CD4-positive, alpha-beta memory T cell (primary cell): ENCODE measurements at regions of chr20 and their contacts with region 1.

Region 1: DNA sequence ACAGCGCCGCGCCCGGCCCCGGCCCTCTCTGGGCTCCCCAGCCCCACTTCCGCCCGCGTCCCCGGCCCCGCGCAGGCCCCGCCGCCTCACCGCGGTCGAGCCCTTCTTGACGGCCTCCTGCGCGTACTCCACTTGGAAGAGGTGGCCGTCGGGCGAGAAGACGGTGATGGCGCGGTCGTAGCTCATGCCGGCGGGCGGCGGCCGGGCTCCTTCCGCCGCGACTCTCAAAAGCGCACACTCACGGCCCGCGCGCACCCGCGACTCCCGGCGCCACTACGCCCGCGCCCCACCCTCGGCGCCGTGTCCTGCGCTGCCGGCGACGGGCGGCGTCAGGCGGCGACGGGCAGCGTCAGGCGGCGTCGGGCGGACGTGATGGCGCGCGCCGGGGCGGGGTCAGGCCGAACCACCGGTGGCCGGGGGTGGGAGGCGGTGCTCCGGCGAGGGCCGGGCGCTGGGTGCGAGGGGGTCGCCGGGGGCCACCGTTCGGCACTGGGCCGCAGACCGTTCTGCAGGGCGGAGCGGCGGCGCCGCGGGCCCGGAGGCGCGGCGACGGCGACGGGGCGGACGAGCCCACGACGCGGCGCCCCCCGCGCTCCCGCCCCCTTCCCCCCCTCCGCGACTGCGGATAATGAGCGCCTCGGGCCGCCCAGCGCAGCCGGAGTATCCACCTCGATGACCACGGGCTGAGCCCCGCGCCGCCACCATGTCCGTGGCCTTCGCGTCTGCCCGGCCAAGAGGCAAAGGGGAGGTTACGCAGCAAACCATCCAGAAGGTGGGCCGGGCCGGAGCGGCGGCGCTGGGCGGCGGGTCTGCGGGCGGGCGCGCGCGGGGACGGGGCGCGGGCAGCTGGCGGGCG is at the starts of genes PSMA7 and SS18L1:
- DNase-seq: peak; percentile 81 to 90 (median 89)
- H3K4me3 ChIP-seq: peak within 1 kb of the TSS; percentile 17 to 62
- H3K4me3 Mint-ChIP-seq: peak within 1 kb of the TSS; percentile 91 to 98 (median 92)
- H3K27ac ChIP-seq: peak within 1 kb of the TSS; percentile 66
- H3K27ac Mint-ChIP-seq: peak within 1 kb of the TSS; percentile 94 to 96 (median 96)
- H3K4me1 ChIP-seq: peaks cover 41% of the 10 kb centered on the region
- H3K4me1 Mint-ChIP-seq: peaks cover 35 to 61% (median 48%) of the 10 kb centered on the region in 4 donors
- H3K27me3 ChIP-seq: no peaks in the 10 kb centered on the region
- H3K27me3 Mint-ChIP-seq: no peaks in the 10 kb centered on the region
- total RNA-seq, gene PSMA7: 182 to 190 TPM
- total RNA-seq, gene SS18L1: 22.7 to 24.8 TPM

Region 2: GRCh38 chr20:62010551-62011402 is 132.6 kb before region 1 on chr20:
- CTCF ChIA-PET with region 1: interaction called, 114 read pairs
- POLR2A ChIA-PET with region 1: interaction called, 6 read pairs
- intact Hi-C with region 1: no loop called
- DNase-seq: peak; percentile 63 to 70 (median 68)
- H3K4me3 ChIP-seq: no peak overlapping the region
- H3K4me3 Mint-ChIP-seq: peak overlapping the region in 1 of 8 donors; percentile 3
- H3K27ac ChIP-seq: no peak overlapping the region
- H3K27ac Mint-ChIP-seq: peak overlapping the region in 5 of 7 donors; percentile 4 to 76 (median 51)
- H3K4me1 ChIP-seq: no peaks in the 10 kb centered on the region
- H3K4me1 Mint-ChIP-seq: peaks cover 7 to 14% (median 9%) of the 10 kb centered on the region in 4 donors
- H3K27me3 ChIP-seq: no peaks in the 10 kb centered on the region
- H3K27me3 Mint-ChIP-seq: no peaks in the 10 kb centered on the region

Region 3: DNA sequence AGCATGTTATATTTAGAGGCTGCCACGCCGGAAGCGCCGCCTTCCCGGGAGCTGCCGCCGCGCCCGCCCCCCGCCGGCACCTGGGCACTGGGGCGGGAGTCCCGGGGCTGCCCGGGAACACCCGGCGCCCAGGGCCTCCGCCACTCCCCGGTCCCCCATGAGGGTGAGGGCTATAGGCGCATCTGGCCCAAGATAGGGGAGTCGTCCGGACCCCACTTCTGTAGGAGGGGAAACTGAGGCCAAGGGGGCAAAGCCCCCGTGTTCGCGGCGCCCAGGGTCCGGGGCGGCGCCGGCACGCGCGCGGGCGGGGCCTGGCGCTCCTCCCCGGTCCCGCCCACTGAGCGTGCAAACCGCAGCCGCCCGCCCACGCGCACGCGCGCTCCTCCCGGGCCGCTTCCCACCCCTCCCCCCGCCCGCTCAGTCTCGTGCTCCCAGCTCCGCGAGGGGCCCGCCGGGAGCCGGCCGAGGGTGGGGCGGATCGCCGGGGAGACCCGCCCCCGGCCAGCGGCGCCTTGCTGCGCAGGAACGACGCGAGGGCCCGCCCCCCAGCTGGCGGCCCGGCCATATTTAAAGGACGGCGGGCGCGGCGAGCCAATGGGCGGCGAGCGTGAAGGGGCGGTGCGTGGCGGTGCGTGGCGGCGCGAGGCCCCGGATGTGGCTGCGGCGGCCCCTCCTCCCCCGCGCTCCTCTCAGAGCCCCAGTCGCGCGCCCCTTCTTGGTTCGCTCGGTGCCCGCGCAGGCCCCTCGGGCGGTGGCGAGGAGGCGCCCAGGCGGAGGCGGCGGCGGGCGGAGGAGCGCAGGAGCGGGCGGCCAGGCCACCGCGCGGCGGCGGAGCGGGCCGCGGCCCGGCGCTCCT is 21.3 kb before region 1 on chr20 and contains the start of gene LSM14B:
- CTCF ChIA-PET with region 1: interaction called, 35 read pairs
- POLR2A ChIA-PET with region 1: interaction called, 115 read pairs
- intact Hi-C with region 1: loop called (anchors 1 kb)
- DNase-seq: peak; percentile 93 to 98 (median 97)
- H3K4me3 ChIP-seq: peak within 1 kb of the TSS; percentile 61 to 73
- H3K4me3 Mint-ChIP-seq: peak within 1 kb of the TSS; percentile 90 to 95 (median 92)
- H3K27ac ChIP-seq: peak within 1 kb of the TSS; percentile 76
- H3K27ac Mint-ChIP-seq: peak within 1 kb of the TSS; percentile 93 to 99 (median 97)
- H3K4me1 ChIP-seq: peaks cover 48% of the 10 kb centered on the region
- H3K4me1 Mint-ChIP-seq: peaks cover 32 to 71% (median 49%) of the 10 kb centered on the region in 4 donors
- H3K27me3 ChIP-seq: no peaks in the 10 kb centered on the region
- H3K27me3 Mint-ChIP-seq: no peaks in the 10 kb centered on the region
- total RNA-seq, gene LSM14B: 48.5 to 50.3 TPM

Region 4: DNA sequence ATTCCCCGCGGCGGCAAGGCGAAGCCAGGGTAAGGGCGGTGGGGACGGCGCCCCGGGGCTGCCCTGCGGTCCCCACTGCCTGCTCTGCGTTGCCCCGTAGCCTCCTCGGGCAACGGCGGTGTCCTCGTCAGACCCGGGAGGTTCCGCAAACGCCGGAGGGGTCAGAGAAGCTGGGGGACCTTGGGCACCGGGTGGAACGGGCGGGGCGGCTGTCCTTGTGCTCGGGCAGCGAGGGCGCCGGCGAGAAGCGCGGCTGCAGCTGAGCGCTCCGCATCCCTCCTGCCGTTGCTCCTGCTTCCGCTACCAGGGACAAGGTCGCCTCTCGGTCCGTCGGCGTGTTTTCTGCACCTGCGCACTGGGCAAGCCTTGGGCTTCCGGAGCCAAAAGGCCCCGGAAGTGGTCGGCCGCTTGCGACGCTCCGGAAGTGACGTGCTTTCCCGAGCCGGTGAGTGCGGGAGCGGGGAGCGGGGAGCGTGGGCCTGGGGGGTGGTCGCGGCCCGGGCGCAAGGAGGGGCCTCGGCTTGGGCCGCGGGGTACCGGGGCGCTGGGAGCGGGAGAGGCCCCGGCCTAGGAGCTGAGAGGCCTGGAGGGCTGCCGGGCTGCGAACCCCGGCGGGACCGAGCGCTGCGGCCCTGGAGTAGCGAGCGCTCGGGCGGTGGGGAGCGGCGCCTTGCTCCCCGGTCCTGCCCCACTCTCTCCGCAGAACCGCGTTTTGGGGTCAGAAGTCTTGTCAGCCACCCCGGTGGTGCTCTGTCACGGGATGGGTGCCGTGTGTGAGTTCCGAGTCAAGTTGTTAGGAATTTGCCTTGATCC is 39.5 kb after region 1 on chr20 and contains the start of gene MTG2:
- CTCF ChIA-PET with region 1: no interaction called
- POLR2A ChIA-PET with region 1: interaction called, 4 read pairs
- intact Hi-C with region 1: loop called (anchors 1 kb)
- DNase-seq: peak; percentile 91 to 96 (median 93)
- H3K4me3 ChIP-seq: peak within 1 kb of the TSS; percentile 53 to 92
- H3K4me3 Mint-ChIP-seq: peak within 1 kb of the TSS; percentile 91 to 97 (median 92)
- H3K27ac ChIP-seq: peak within 1 kb of the TSS; percentile 94
- H3K27ac Mint-ChIP-seq: peak within 1 kb of the TSS; percentile 93 to 98 (median 96)
- H3K4me1 ChIP-seq: peaks cover 22% of the 10 kb centered on the region
- H3K4me1 Mint-ChIP-seq: peaks cover 23 to 51% (median 37%) of the 10 kb centered on the region in 4 donors
- H3K27me3 ChIP-seq: no peaks in the 10 kb centered on the region
- H3K27me3 Mint-ChIP-seq: no peaks in the 10 kb centered on the region
- total RNA-seq, gene MTG2: 48.5 to 50.7 TPM

Region 5: DNA sequence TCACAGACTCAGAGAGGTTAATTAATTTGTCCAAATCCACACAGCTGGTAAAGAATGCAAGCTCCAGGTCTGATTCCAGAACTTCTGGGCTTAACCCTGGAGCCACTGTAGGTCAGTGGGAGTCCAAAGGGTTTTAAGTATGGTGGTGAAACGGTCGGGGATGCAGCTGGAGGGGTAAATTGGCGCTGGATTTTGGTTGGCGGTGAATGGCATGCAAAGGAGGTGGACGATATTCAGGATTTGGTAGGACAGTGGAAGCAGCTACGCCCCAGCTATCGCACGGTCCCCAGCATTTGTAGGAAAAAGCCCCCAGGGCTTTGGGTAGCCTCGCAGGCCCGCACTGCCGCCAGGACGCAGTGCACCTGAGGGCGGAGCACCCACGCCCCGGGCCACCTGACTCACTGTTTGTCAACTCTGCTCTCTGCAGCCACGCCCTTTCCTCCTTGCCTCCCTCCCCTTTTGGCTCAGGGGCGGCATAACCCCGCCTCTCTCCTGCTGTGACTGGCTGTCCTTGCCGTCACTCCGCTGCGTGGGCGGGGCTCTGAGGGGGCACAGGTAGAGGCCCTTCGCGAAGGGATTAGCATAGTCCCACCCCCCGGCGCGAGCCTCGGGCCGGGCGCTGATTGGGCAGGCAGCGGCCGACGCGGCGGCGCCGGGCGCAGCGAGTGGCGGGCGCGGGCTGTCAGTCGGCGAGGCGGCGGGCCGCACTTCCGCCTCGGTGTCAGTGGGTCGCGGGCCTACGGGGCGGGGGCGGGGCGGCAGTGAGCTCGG is 94.6 kb after region 1 on chr20 and contains the start of gene OSBPL2:
- CTCF ChIA-PET with region 1: no interaction called
- POLR2A ChIA-PET with region 1: no interaction called
- intact Hi-C with region 1: loop called (anchors 1 kb)
- DNase-seq: peak; percentile 100
- H3K4me3 ChIP-seq: peak within 1 kb of the TSS; percentile 62 to 65
- H3K4me3 Mint-ChIP-seq: peak within 1 kb of the TSS; percentile 82 to 88 (median 86)
- H3K27ac ChIP-seq: peak within 1 kb of the TSS; percentile 69
- H3K27ac Mint-ChIP-seq: peak within 1 kb of the TSS; percentile 84 to 97 (median 95)
- H3K4me1 ChIP-seq: peaks cover 38% of the 10 kb centered on the region
- H3K4me1 Mint-ChIP-seq: peaks cover 26 to 51% (median 39%) of the 10 kb centered on the region in 4 donors
- H3K27me3 ChIP-seq: no peaks in the 10 kb centered on the region
- H3K27me3 Mint-ChIP-seq: peaks cover 0 to 7% of the 10 kb centered on the region in 2 donors
- total RNA-seq, gene OSBPL2: 76.2 to 84.4 TPM